ENCODE measurements at regions of chr7 and their contacts with region 1.

Region 1: GRCh38 chr7:128425850-128426249 is 16.1 kb upstream of the IMPDH1 start:
- DNase-seq: peak in 9 of 10 donors; percentile 42 to 94 (median 77)

Region 2: DNA sequence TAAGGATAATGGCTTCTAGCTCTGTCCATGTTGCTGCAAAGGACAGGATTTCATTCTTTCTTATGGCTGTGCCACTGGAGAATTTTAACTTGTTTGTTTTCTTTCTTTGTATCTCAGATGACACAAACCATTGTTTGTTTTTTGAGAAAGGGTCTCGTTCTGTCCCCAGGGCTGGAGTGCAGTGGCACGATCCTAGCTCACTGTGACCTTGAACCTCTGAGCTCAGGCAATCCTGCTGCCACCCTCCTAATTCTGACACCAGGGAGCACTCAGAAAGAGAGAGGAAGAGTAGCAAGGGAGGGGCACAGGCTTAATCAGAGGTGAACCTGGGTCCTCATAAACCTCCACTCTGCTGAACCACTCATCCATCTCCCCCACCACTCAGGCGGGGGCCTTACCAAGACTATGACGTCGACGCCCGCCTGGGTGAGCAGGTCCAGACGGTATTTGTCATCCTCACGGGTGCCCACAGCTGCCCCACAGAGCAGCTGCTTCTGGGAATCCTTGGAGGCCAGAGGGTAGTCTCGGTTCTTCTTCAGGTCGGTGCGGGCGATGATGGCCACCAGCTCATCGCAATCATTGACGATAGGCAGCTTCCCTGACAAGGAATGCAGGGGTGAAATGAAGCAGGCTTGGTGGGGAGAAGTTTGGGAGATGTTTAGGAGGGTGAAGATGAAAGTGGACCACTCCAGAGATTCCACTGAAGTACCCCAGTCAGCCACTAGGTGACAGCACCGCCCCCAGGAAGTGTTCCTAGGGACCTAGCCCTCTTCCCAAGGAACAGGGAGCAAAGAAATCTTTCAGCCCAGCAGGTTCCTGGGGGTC is 27.6 kb before region 1 on chr7:
- intact Hi-C with region 1: loop called (anchors 1 kb)
- DNase-seq: peak in 7 of 10 donors; percentile 58 to 93 (median 76)

Region 3: GRCh38 chr7:128455551-128456254 is 29.9 kb after region 1 on chr7 and contains the start of gene HILPDA:
- intact Hi-C with region 1: loop called (anchors 1 kb)
- DNase-seq: peak; percentile 81 to 98 (median 88)

Region 4: DNA sequence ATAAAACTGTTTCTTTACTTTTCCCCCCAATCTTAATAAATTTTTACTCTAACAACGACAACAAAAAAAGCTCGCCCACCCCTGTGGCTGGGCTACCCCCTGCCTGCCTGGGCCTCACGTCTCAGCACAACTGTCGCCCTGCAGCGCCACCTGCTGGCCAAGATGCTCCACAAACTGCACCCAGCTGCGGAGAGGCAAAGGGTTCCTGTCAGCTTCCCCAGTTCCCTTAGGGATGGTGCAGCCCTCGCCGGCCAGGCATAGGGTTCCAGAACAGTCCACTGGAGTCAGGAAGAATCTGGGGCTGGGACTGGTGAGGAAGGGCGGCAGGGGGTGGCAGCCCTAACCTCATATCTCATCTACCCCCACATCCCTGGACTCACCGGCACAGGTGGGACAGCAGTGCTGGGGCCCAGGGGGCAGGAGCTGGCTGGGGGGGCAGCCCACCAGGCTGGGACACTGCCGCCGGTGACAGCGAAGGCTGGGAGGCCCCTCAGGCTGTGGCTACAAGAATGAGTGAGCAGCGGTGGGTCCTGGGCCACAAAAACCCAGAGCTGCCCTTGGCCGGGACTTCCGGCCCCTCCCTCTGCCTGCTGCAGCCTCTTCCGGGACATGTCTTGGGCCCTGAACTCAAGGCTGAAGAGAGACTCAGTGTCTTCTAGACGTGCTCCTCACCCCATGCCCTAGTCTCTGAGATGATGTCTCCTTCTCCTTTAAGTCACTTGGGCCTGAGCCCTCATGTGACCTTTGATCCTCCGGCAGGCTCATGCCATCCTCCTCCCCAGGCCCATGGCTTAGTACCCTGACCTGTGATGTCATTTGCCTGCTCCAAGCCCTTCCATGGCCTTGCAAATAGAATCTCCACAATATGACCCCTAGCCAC is 458.0 kb after region 1 on chr7:
- intact Hi-C with region 1: loop called (anchors 5 kb)
- DNase-seq: peak; percentile 72 to 97 (median 86)